ENCODE measurements at regions of chr4 and their contacts with region 1.

Region 1: GRCh38 chr4:182938205-182938645 is 21.0 kb upstream of the DCTD start:
- DNase-seq: peak; percentile 46 to 53 (median 50)
- H3K4me3 ChIP-seq: no peak overlapping the region
- H3K4me3 Mint-ChIP-seq: peak overlapping the region in 2 of 8 donors; percentile 12 to 42
- H3K27ac ChIP-seq: no peak overlapping the region
- H3K27ac Mint-ChIP-seq: no peak overlapping the region
- H3K4me1 ChIP-seq: no peaks in the 10 kb centered on the region
- H3K4me1 Mint-ChIP-seq: peaks cover 0 to 5% (median 1%) of the 10 kb centered on the region in 4 donors
- H3K27me3 ChIP-seq: no peaks in the 10 kb centered on the region
- H3K27me3 Mint-ChIP-seq: peaks cover 6 to 7% of the 10 kb centered on the region in 2 donors

Region 2: DNA sequence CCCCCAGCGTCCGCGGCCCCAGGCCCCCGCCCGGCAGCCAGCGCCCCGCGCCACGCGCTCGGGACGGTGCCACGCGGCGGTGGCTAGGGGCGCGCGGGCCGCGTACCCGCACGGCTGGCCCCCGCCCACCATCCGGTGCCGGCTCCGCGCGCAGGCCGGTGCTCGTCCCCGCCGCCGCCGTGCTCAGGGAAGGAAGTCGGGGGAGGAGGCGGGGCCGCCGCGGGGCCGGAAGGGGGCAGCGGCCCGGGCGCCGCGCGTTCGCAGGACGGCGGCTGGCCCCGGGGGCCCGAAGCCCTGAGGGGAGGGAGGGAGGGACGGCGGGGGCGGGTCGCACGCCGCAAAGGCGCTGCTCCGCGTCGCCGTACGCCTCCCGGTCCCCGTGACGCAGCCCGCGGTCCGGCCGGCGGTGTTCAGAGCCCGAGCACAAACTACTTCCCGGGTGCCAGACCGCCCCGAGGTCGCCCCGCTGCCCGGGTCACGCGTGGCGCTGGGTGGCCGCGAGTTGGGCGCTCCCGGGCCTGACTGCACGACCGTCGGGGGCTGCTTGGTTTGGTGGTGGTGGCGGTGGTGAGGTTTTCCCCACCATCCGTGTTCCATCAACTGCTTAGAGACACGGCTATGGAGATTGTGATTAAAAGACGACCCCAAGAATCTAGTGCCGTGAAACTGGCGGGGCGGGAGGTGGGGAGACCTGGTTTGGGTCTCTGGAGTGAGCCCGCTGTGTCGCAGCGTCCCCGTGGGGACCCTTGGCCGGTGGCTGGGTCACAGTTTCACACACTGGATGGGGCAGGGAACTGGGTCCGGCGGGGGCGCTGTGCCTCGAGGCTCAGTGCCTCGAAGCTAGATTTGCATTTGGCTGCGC is 20.8 kb before region 1 on chr4 and contains the start of gene DCTD:
- CTCF ChIA-PET with region 1: interaction called, 15 read pairs
- POLR2A ChIA-PET with region 1: no interaction called
- intact Hi-C with region 1: loop called (anchors 1 kb)
- DNase-seq: peak; percentile 78 to 84 (median 81)
- H3K4me3 ChIP-seq: peak within 1 kb of the TSS; percentile 55 to 81
- H3K4me3 Mint-ChIP-seq: peak within 1 kb of the TSS; percentile 83 to 95 (median 92)
- H3K27ac ChIP-seq: peak within 1 kb of the TSS; percentile 94
- H3K27ac Mint-ChIP-seq: peak within 1 kb of the TSS; percentile 85 to 98 (median 95)
- H3K4me1 ChIP-seq: peaks cover 30% of the 10 kb centered on the region
- H3K4me1 Mint-ChIP-seq: peaks cover 27 to 64% (median 39%) of the 10 kb centered on the region in 4 donors
- H3K27me3 ChIP-seq: no peaks in the 10 kb centered on the region
- H3K27me3 Mint-ChIP-seq: no peaks in the 10 kb centered on the region
- total RNA-seq, gene DCTD: 66.6 to 67.7 TPM

Region 3: DNA sequence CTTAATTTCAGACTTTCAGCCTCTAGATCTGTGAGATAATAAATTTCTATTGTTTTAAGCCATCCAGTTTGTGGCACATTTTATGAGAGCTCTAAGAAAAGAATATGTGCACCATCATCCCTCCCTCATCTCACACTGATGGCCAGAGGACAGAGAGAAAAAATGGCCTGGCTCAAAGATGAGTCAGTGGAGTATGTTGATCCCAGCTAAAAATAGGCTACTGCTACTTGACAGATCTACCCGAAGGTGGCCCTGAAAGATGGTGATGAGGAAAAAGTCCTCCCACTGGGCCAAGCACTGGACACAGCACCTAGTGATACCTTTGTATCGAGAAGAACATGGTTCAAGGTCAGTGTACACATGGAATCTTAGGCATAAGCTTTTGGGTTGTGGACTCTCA is 17.2 kb after region 1 on chr4:
- CTCF ChIA-PET with region 1: interaction called, 30 read pairs
- POLR2A ChIA-PET with region 1: no interaction called
- intact Hi-C with region 1: no loop called
- DNase-seq: no peak
- H3K4me3 ChIP-seq: no peak overlapping the region
- H3K4me3 Mint-ChIP-seq: no peak overlapping the region
- H3K27ac ChIP-seq: no peak overlapping the region
- H3K27ac Mint-ChIP-seq: no peak overlapping the region
- H3K4me1 ChIP-seq: no peaks in the 10 kb centered on the region
- H3K4me1 Mint-ChIP-seq: no peaks in the 10 kb centered on the region
- H3K27me3 ChIP-seq: no peaks in the 10 kb centered on the region
- H3K27me3 Mint-ChIP-seq: peaks cover 0 to 6% of the 10 kb centered on the region in 2 donors

Region 4: DNA sequence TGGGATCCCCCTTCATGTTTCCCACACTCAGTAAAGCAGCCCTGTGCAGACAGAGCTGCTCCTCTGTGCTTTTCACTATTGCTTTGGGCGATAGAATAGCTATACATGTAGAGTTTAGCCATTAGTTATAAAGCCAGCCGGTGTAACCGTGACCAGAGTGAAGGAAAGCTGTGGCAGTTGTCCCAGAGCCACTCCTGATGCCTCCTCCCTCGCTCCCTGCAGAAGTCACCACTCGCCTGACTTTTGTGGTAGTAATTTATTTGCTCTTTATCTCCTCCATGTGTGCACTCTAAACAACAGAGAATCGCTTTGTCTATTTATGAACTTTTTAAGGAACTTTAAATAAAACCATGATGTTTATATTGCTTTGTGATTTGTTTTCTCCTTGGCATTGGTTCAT is 119.0 kb after region 1 on chr4:
- CTCF ChIA-PET with region 1: no interaction called
- POLR2A ChIA-PET with region 1: no interaction called
- intact Hi-C with region 1: no loop called
- DNase-seq: no peak
- H3K4me3 ChIP-seq: no peak overlapping the region
- H3K4me3 Mint-ChIP-seq: no peak overlapping the region
- H3K27ac ChIP-seq: no peak overlapping the region
- H3K27ac Mint-ChIP-seq: no peak overlapping the region
- H3K4me1 ChIP-seq: no peaks in the 10 kb centered on the region
- H3K4me1 Mint-ChIP-seq: no peaks in the 10 kb centered on the region
- H3K27me3 ChIP-seq: no peaks in the 10 kb centered on the region
- H3K27me3 Mint-ChIP-seq: peaks cover 5 to 8% of the 10 kb centered on the region in 2 donors

Region 5: GRCh38 chr4:183249857-183250256 is 311.6 kb after region 1 on chr4:
- CTCF ChIA-PET with region 1: interaction called, 16 read pairs
- POLR2A ChIA-PET with region 1: no interaction called
- intact Hi-C with region 1: no loop called
- DNase-seq: peak in 4 of 5 donors; percentile 3 to 14 (median 6)
- H3K4me3 ChIP-seq: no peak overlapping the region
- H3K4me3 Mint-ChIP-seq: no peak overlapping the region
- H3K27ac ChIP-seq: no peak overlapping the region
- H3K27ac Mint-ChIP-seq: no peak overlapping the region
- H3K4me1 ChIP-seq: no peaks in the 10 kb centered on the region
- H3K4me1 Mint-ChIP-seq: no peaks in the 10 kb centered on the region
- H3K27me3 ChIP-seq: no peaks in the 10 kb centered on the region
- H3K27me3 Mint-ChIP-seq: no peaks in the 10 kb centered on the region

Region 6: GRCh38 chr4:183261953-183262775 is 323.9 kb after region 1 on chr4:
- CTCF ChIA-PET with region 1: interaction called, 71 read pairs
- POLR2A ChIA-PET with region 1: interaction called, 5 read pairs
- intact Hi-C with region 1: loop called (anchors 1 kb)
- DNase-seq: peak; percentile 63 to 69 (median 66)
- H3K4me3 ChIP-seq: no peak overlapping the region
- H3K4me3 Mint-ChIP-seq: peak overlapping the region in 1 of 8 donors; percentile 33
- H3K27ac ChIP-seq: no peak overlapping the region
- H3K27ac Mint-ChIP-seq: peak overlapping the region; percentile 54 to 91 (median 85)
- H3K4me1 ChIP-seq: peaks cover 5% of the 10 kb centered on the region
- H3K4me1 Mint-ChIP-seq: peaks cover 5 to 8% (median 7%) of the 10 kb centered on the region in 4 donors
- H3K27me3 ChIP-seq: no peaks in the 10 kb centered on the region
- H3K27me3 Mint-ChIP-seq: no peaks in the 10 kb centered on the region

Measured in CD4-positive, alpha-beta memory T cell (primary cell).